ENCODE measurements at regions of chr18 and their contacts with region 1.

Region 1: DNA sequence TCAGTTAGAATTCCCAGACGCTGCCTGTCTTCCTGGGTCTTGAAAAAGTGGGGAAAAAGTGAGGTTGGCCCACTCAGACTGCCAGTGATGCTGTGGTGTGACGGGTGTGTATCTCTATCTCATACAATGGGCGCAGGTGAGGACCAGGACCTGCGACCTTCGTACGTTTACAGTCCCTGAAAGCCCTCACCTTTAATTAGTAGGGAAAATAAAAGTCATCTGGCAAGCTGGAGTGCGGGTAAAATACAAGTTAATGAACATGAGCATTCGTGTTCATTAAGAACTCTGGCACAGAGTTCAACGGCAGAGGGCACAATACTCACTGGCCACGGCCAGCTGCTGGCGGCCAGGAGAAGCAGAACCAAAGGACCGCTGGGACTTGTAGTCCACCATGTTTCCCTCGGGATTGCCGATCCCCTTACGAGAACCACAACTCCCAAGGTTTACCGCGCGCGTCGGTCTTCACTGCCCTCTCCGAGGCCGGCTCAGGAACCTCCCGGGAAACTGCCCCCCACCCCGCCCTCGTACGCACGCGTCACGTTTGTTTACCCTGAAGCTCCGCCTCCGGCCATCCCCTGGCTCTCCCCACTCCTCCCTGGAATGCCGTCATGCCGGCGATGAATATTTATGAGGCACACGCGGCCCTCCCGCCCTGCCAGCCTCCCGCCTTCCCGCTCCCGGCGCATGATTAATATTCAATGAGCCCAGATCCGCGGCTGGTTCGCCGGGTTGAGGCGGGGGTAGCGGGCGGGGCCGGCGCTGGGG is 488 bp upstream of the PHLPP1 start:
- DNase-seq: peak; percentile 100
- ATAC-seq: peak; percentile 95 to 100 (median 99)
- H3K4me3 ChIP-seq: peak overlapping the region; percentile 54 to 83 (median 77)
- H3K27ac ChIP-seq: peak overlapping the region; percentile 89 to 96 (median 91)
- H3K4me1 ChIP-seq: peaks cover 3 to 35% (median 24%) of the 10 kb centered on the region in 9 donors
- H3K27me3 ChIP-seq: no peaks in the 10 kb centered on the region
- CTCF ChIP-seq: peak; percentile 70 to 94 (median 82)

Region 2: GRCh38 chr18:62198259-62198658 is 516.6 kb before region 1 on chr18:
- intact Hi-C with region 1: loop called in 1 of 10 experiments (anchors 10 kb)
- DNase-seq: no peak
- ATAC-seq: no peak
- H3K4me3 ChIP-seq: no peak overlapping the region
- H3K27ac ChIP-seq: no peak overlapping the region
- H3K4me1 ChIP-seq: peaks cover 0 to 52% (median 16%) of the 10 kb centered on the region in 9 donors
- H3K27me3 ChIP-seq: no peaks in the 10 kb centered on the region
- CTCF ChIP-seq: no peak

Region 3: GRCh38 chr18:62584241-62585120 is 130.4 kb before region 1 on chr18:
- intact Hi-C with region 1: loop called (anchors 2 to 10 kb)
- DNase-seq: peak; percentile 75 to 89
- ATAC-seq: peak; percentile 72 to 91 (median 87)
- H3K4me3 ChIP-seq: peak overlapping the region in 4 of 10 donors; percentile 9 to 25 (median 20)
- H3K27ac ChIP-seq: peak overlapping the region in 7 of 10 donors; percentile 19 to 53 (median 39)
- H3K4me1 ChIP-seq: peaks cover 0 to 30% (median 16%) of the 10 kb centered on the region in 9 donors
- H3K27me3 ChIP-seq: no peaks in the 10 kb centered on the region
- CTCF ChIP-seq: peak; percentile 91 to 98 (median 94)

Region 4: DNA sequence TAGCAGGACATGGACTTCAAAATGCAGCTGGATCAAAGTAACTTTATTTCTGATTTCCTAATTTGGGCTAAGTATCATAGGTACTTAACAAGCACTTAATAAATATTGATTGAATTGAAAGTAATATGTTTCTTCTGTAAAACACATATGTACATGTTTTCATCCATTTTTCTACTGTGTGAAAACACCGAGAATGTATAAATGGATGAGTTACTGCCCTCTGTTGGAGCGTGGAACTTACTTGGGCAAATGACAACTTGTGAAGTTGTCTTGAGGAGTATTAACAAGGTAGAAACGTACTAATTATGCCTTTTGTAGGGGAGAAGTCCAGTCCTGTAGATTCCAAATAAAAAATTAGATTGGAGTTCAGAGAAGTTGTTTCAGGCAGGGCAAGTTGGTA is 87.7 kb after region 1 on chr18:
- intact Hi-C with region 1: loop called in 4 of 10 experiments (anchors 5 to 10 kb)
- DNase-seq: no peak
- ATAC-seq: no peak
- H3K4me3 ChIP-seq: no peak overlapping the region
- H3K27ac ChIP-seq: no peak overlapping the region
- H3K4me1 ChIP-seq: peaks cover 0 to 20% (median 0%) of the 10 kb centered on the region in 9 donors
- H3K27me3 ChIP-seq: no peaks in the 10 kb centered on the region
- CTCF ChIP-seq: peak in 6 of 9 donors; percentile 6 to 41 (median 27)

Region 5: GRCh38 chr18:62957885-62958472 is 243.1 kb after region 1 on chr18:
- intact Hi-C with region 1: loop called in 6 of 10 experiments (anchors 5 kb)
- DNase-seq: peak in 1 of 2 donors; percentile 46
- ATAC-seq: peak in 7 of 8 donors; percentile 29 to 72 (median 51)
- H3K4me3 ChIP-seq: no peak overlapping the region
- H3K27ac ChIP-seq: no peak overlapping the region
- H3K4me1 ChIP-seq: peaks cover 0 to 16% (median 8%) of the 10 kb centered on the region in 9 donors
- H3K27me3 ChIP-seq: no peaks in the 10 kb centered on the region
- CTCF ChIP-seq: peak in 8 of 9 donors; percentile 33 to 65 (median 56)

Region 6: GRCh38 chr18:63367053-63367953 is 652.5 kb after region 1 on chr18 and contains the start of gene KDSR:
- intact Hi-C with region 1: loop called in 1 of 10 experiments (anchors 10 kb)
- DNase-seq: peak; percentile 95 to 97
- ATAC-seq: peak; percentile 97 to 99 (median 98)
- H3K4me3 ChIP-seq: peak within 1 kb of the TSS; percentile 81 to 97 (median 90)
- H3K27ac ChIP-seq: peak within 1 kb of the TSS; percentile 94 to 99 (median 98)
- H3K4me1 ChIP-seq: peaks cover 3 to 36% (median 13%) of the 10 kb centered on the region in 9 donors
- H3K27me3 ChIP-seq: no peaks in the 10 kb centered on the region
- CTCF ChIP-seq: peak in 1 of 9 donors; percentile 8
- total RNA-seq, gene KDSR: 28.6 to 41.6 (median 34.9) TPM